Colonic mucosa (tissue), 4 donors: ENCODE measurements at regions of chr6 and their contacts with region 1.

Region 1: GRCh38 chr6:84227434-84228197 is at the start of gene CEP162:
- DNase-seq: peak; percentile 96
- H3K4me3 ChIP-seq: peak within 1 kb of the TSS; percentile 56
- H3K27ac ChIP-seq: peak within 1 kb of the TSS; percentile 64
- H3K4me1 ChIP-seq: no peaks in the 10 kb centered on the region
- H3K27me3 ChIP-seq: no peaks in the 10 kb centered on the region
- CTCF ChIP-seq: peak; percentile 64
- total RNA-seq, gene CEP162: 6.8 to 7.1 TPM

Region 2: GRCh38 chr6:83615025-83615999 is 612.3 kb before region 1 on chr6:
- intact Hi-C with region 1: loop called (anchors 10 kb)
- DNase-seq: no peak
- H3K4me3 ChIP-seq: no peak overlapping the region
- H3K27ac ChIP-seq: no peak overlapping the region
- H3K4me1 ChIP-seq: no peaks in the 10 kb centered on the region
- H3K27me3 ChIP-seq: no peaks in the 10 kb centered on the region
- CTCF ChIP-seq: no peak

Region 3: DNA sequence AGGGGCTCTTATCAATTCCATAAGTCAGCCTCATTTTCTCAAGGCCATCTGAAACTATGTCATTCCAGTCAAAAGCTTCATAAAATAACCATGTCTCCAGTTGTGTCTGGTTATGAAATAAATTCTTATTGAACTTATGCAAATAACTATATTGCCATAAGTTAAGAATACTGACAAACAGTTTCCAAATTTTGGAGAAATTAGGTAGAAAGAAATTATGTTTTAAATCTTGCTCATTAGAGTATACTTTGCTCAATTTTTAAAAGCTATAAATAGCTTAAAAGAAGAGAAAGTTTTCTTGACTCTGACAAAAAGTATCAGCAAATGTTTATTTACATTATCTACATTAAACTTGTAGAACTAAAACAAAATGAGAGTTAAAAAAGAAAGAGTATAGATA is 257.0 kb before region 1 on chr6:
- intact Hi-C with region 1: no loop called
- DNase-seq: no peak
- H3K4me3 ChIP-seq: no peak overlapping the region
- H3K27ac ChIP-seq: no peak overlapping the region
- H3K4me1 ChIP-seq: no peaks in the 10 kb centered on the region
- H3K27me3 ChIP-seq: no peaks in the 10 kb centered on the region
- CTCF ChIP-seq: no peak